SK-N-SH (cell line): ENCODE measurements at regions of chr14 and their contacts with region 1.

Region 1: GRCh38 chr14:92986254-92987147 is 63.6 kb downstream of the CHGA start:
- DNase-seq: peak; percentile 69
- H3K4me3 ChIP-seq: no peak overlapping the region
- H3K27ac ChIP-seq: peak overlapping the region; percentile 41 to 97; a peak in 3 of 4 replicates
- H3K4me1 ChIP-seq: peaks cover 0 to 65% of the 10 kb centered on the region in 2 experiments; a peak in 2 of 4 replicates
- H3K27me3 ChIP-seq: no peaks in the 10 kb centered on the region
- CTCF ChIP-seq: no peak
- EP300 ChIP-seq: peak in 1 of 2 experiments; percentile 53; a peak in 1 of 4 replicates
- RAD21 ChIP-seq: no peak

Region 2: GRCh38 chr14:92890830-92891588 is 95.5 kb before region 1 on chr14:
- CTCF ChIA-PET with region 1: interaction called, 5 read pairs
- POLR2A ChIA-PET with region 1: interaction called, 14 read pairs
- DNase-seq: no peak
- H3K4me3 ChIP-seq: no peak overlapping the region
- H3K27ac ChIP-seq: peak overlapping the region in 1 of 2 experiments; percentile 81; a peak in 2 of 4 replicates
- H3K4me1 ChIP-seq: peaks cover 0 to 38% of the 10 kb centered on the region in 2 experiments; a peak in 2 of 4 replicates
- H3K27me3 ChIP-seq: no peaks in the 10 kb centered on the region; the same call in 1 of the 2 replicates
- CTCF ChIP-seq: no peak
- EP300 ChIP-seq: peak in 1 of 2 experiments; percentile 84; a peak in 2 of 4 replicates
- RAD21 ChIP-seq: peak; percentile 34; the same call in 1 of the 2 replicates

Region 3: DNA sequence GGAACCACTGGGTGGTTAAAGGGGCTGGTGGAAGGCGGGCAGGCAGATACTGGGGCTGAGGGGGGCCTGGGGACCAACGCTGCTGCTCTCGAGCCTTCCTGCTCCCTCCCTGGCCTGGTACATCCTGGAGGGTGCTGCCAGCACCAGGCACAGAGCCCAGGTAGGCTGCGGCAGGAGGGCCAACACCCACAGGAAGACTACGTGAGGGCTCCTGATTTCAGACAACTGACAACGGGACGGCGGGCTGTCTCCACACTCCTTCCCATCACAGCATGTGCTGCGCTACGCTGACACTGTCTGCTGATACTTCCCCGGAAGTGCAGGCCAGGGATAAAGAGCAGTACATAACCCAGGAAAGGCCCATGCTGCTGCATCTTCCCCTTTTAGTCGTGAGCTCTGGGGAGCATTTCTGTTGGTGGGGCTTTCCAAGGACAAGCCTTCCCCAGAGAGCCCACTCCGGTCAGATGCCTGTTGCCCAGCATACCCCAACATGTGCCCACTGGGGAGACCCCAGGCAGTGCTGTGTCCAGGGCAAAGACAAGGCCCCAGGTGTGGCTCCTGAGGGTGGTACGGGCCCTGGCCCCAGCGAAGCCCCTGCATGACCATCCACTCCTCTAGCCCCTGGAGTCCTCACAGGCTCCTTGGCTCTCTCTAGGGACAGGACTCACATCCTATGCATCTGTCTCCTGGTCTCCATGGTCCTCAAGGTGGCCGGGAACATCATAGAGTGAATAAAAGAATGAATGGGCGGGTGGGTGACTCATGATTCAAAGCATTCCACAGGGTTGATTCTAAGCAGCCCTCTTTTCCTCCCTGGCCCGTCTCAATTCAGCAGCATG is 25.6 kb before region 1 on chr14:
- CTCF ChIA-PET with region 1: interaction called, 6 read pairs
- POLR2A ChIA-PET with region 1: interaction called, 13 read pairs
- DNase-seq: no peak
- H3K4me3 ChIP-seq: no peak overlapping the region
- H3K27ac ChIP-seq: peak overlapping the region in 1 of 2 experiments; percentile 97; a peak in 2 of 4 replicates
- H3K4me1 ChIP-seq: peaks cover 3 to 83% of the 10 kb centered on the region in 2 experiments; a peak in 3 of 4 replicates
- H3K27me3 ChIP-seq: no peaks in the 10 kb centered on the region
- CTCF ChIP-seq: no peak
- EP300 ChIP-seq: no peak
- RAD21 ChIP-seq: no peak

Region 4: DNA sequence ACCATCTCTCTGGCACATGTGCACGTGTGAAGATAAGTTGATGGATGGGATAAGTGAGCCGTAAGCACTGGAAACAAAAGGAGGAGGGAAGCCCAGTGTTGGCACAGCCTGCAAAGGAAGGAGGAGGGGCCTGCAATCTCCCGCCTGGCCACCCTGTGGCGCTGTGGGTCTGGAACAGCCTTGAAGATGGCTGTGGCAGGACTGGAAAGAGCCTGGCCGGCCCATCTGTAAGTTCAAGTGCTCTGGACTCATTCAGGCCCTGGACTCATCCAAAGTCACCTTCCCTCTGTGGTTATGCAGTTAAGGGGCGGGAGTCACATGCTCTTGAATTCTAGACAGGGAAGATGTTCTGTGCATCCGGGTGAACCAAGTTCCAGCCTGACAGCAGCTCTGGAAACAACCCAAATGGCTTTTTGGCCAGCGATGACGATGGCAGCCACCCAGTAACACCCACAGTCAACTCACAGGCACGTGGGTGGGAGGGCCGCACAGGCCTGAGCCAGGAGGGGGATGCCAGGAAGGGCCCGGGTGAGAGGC is 13.2 kb before region 1 on chr14:
- CTCF ChIA-PET with region 1: interaction called, 13 read pairs
- POLR2A ChIA-PET with region 1: interaction called, 7 read pairs
- DNase-seq: peak; percentile 74
- H3K4me3 ChIP-seq: no peak overlapping the region; a peak in 1 of 4 replicates
- H3K27ac ChIP-seq: peak overlapping the region in 1 of 2 experiments; percentile 83; a peak in 1 of 4 replicates
- H3K4me1 ChIP-seq: peaks cover 0 to 45% of the 10 kb centered on the region in 2 experiments; a peak in 1 of 4 replicates
- H3K27me3 ChIP-seq: no peaks in the 10 kb centered on the region
- CTCF ChIP-seq: peak; percentile 55
- EP300 ChIP-seq: no peak
- RAD21 ChIP-seq: peak; percentile 76

Region 5: DNA sequence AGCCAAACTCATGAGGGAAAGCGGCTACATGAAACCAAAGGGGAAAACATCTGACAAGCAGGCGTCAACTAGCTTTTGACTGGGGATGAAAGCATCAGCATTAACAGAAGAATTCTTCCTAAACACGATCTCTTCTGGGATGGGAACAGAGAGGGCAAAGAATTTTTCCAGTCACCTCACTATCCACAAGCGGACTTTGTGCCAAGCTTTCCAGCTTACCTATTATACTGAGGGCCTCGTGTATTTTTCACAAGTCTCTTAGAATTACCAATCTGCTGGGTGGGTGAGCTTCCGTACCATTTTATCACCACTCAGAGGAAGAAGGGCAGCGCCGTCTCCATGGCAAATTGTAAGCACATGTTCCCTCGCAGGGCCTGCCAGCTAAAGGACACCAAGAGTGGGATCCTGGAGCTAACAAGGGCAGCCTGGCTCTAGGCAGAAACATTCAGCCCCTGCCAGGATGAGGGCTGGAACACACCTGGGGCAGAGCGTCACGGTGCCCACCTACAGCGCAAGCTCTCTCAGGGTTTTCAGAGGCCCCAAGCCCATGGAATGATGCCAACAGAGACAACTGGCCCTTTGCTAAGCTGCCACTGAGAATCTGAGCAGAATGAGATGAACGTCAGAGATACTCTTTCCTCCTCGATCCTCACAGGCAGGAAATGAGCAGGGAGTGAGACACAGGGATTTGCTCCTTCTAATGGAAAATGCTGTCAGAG is 11.0 kb after region 1 on chr14:
- CTCF ChIA-PET with region 1: interaction called, 15 read pairs
- POLR2A ChIA-PET with region 1: interaction called, 10 read pairs
- DNase-seq: peak; percentile 81
- H3K4me3 ChIP-seq: no peak overlapping the region
- H3K27ac ChIP-seq: peak overlapping the region; percentile 28 to 96; a peak in 3 of 4 replicates
- H3K4me1 ChIP-seq: peaks cover 3 to 57% of the 10 kb centered on the region in 2 experiments; a peak in 2 of 4 replicates
- H3K27me3 ChIP-seq: no peaks in the 10 kb centered on the region
- CTCF ChIP-seq: no peak
- EP300 ChIP-seq: no peak; a peak in 1 of 4 replicates
- RAD21 ChIP-seq: no peak; the same call in 1 of the 2 replicates

Region 6: DNA sequence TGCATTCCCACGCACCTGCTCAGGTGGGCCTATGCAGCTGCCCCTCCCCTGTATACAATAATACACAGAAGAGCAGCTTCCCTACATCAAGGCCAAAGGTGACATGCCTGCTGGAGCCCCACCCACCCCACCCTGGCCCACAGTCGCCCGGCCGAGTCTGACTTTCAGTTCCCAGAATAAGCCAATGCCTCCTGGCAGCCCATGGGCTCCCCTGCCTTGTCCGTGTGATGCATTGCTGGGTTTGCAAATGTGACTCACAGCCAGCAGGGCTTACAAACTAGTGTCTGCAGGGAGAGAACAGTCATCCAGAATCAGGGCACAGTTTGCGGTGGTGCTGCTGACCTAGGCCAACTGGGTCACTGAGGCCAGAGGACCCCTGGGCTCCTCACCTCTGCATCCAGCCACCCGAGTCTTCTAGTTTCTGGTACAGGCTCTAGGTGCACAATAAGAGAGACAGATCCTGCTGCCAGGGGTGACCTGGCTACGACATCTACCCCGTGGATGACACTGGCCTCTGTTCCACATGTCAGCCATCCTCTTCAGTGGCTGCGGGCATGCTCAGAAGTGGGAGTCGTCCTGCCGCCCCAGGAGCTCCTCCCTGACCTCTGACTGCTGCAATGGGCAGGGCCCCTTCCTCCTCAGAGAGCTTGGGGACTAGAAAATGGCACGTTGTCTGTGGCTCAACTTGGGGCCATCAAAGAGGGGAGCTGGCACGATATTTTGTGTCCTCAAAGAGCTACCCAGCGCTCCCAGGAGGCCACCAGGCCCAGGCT is 20.9 kb after region 1 on chr14:
- CTCF ChIA-PET with region 1: interaction called, 19 read pairs
- POLR2A ChIA-PET with region 1: interaction called, 39 read pairs
- DNase-seq: no peak
- H3K4me3 ChIP-seq: no peak overlapping the region
- H3K27ac ChIP-seq: peak overlapping the region in 1 of 2 experiments; percentile 98; a peak in 2 of 4 replicates
- H3K4me1 ChIP-seq: peaks cover 19 to 100% of the 10 kb centered on the region in 2 experiments
- H3K27me3 ChIP-seq: no peaks in the 10 kb centered on the region
- CTCF ChIP-seq: no peak
- EP300 ChIP-seq: no peak
- RAD21 ChIP-seq: no peak

Region 7: GRCh38 chr14:93146119-93146518 is 159.6 kb after region 1 on chr14:
- CTCF ChIA-PET with region 1: no interaction called
- POLR2A ChIA-PET with region 1: no interaction called
- DNase-seq: no peak
- H3K4me3 ChIP-seq: no peak overlapping the region
- H3K27ac ChIP-seq: no peak overlapping the region
- H3K4me1 ChIP-seq: no peaks in the 10 kb centered on the region; a peak in 1 of 4 replicates
- H3K27me3 ChIP-seq: no peaks in the 10 kb centered on the region
- CTCF ChIP-seq: no peak
- EP300 ChIP-seq: no peak
- RAD21 ChIP-seq: no peak